ENCODE measurements at regions of chr2 and their contacts with region 1.

Region 1: DNA sequence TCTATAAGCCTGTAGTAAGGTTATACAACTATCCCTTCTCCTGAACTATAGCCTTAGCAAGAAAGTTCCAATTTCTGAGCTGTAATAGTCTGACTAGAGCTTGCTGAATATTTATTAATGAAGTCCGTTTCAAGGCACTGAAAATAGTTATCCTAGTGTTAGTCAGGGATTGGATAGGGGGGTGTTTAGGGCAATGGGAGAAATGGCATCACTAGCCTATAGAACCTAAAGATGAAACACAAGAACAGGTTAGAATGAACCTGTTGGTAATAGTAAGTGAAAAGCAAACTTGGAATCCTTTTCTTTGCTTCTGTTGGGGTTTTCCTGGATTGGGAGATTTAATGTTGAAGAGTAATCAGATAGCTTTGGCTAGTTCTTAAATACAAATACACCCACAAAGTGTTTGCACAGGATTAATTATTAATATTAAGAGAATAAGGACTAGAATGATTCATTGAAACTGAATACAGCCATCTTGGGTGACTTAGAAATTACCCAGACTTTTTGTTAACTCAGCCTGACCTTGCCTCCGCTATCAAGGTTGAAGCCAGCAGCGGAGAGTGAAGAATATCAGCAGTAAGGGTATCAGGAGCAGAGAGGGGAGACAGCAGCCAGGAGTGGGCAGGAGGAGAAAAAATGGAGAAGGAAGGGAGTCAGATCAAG is 14.4 kb downstream of the CCNT2 start:
- DNase-seq: no peak
- CTCF ChIP-seq: no peak

Region 2: DNA sequence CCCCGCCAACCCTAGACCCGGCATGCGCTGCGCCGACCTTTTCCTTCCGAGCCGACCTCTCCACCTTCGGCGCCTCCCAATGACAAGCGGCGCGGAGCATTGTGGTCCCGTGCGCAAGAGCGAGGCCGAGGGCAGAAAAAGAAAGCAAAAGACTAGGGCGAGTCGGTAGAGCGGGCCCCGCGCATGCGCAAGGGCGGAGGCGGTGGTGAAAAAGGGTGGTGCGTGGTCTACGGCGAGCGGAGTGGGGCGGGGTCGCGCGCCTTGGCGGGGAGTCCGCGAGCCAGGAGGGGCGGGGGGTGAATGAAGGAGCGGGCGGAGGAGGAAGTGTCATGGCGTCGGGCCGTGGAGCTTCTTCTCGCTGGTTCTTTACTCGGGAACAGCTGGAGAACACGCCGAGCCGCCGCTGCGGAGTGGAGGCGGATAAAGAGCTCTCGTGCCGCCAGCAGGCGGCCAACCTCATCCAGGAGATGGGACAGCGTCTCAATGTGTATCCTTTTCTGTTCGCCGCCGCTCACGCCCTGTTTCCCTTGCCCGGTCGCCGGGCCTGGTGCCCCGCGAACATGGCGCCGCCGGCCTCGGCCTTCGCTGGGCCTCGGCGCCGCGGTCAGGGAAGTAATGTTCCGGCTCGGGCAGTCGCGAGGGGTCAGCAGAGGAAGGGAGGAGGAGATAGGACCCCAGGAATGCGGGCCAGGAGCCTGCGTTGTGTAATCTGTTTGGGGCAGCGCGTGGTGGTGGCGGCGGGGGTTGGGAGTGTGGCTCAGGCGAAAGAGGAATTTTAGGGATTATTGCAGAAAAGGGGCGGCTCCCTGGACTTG is 14.3 kb before region 1 on chr2 and contains the start of gene CCNT2:
- CTCF ChIA-PET with region 1: interaction called, 15 read pairs
- POLR2A ChIA-PET with region 1: no interaction called
- DNase-seq: peak; percentile 98
- CTCF ChIP-seq: no peak

Region 3: GRCh38 chr2:134943540-134943939 is 10.5 kb after region 1 on chr2:
- CTCF ChIA-PET with region 1: interaction called, 11 read pairs
- POLR2A ChIA-PET with region 1: no interaction called
- DNase-seq: peak; percentile 38
- CTCF ChIP-seq: no peak

Measured in GM10248 (cell line).